Activated CD4-positive, alpha-beta T cell treated with anti-CD3 and anti-CD28 coated beads, Interleukin-2, amount 10 ng/mL, durations not matched to agents 24 days and 14 days (primary cell): ENCODE measurements at regions of chr11 and their contacts with region 1.

Region 1: DNA sequence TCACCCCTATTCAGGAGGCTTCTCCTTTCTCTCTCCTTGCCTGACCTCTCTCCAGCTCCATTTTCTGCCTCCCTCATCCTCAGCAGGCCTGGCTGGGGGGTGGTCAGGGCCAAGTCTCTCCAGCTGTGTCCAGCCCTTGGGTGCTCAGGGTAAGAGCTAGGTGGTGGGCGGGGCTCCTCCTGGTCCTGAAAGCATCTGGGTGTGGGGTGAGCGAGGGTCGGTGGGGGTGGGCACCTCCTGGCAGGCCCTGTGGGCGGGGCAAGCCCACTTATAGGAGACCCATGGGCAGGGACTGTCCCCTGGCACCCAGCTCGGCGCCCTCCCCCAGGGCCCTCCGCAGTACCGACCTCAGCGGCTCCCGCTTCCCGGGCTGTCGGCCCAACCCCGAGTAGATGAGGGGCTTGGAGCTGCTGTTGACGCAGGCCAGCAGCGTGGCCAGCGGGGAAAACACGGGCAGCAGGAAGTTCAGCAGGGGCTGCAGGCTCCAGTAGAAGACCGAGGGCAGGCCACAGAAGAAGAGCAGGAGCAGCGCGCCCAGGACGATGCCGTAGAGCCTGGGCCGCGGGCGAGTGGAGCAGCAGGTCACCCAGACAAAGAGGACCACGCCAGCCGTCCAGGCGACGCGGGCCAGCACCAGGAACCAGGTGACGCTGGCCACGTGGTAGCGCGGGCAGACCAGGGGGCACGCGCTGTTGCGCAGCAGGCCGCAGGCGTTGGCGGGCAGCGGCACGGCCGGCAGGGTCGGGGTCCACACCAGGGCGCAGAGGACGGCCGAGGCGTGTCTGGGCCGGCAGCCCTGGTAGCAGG is 734 bp downstream of the MRGPRG start:
- DNase-seq: no peak
- H3K4me3 Mint-ChIP-seq: no peak overlapping the region
- H3K27ac Mint-ChIP-seq: no peak overlapping the region
- H3K4me1 Mint-ChIP-seq: no peaks in the 10 kb centered on the region
- H3K27me3 Mint-ChIP-seq: peaks cover 3% of the 10 kb centered on the region

Region 2: GRCh38 chr11:3006505-3007183 is 211.2 kb before region 1 on chr11:
- intact Hi-C with region 1: no loop called
- DNase-seq: no peak
- H3K4me3 Mint-ChIP-seq: no peak overlapping the region
- H3K27ac Mint-ChIP-seq: no peak overlapping the region
- H3K4me1 Mint-ChIP-seq: peaks cover 23% of the 10 kb centered on the region
- H3K27me3 Mint-ChIP-seq: no peaks in the 10 kb centered on the region

Region 3: DNA sequence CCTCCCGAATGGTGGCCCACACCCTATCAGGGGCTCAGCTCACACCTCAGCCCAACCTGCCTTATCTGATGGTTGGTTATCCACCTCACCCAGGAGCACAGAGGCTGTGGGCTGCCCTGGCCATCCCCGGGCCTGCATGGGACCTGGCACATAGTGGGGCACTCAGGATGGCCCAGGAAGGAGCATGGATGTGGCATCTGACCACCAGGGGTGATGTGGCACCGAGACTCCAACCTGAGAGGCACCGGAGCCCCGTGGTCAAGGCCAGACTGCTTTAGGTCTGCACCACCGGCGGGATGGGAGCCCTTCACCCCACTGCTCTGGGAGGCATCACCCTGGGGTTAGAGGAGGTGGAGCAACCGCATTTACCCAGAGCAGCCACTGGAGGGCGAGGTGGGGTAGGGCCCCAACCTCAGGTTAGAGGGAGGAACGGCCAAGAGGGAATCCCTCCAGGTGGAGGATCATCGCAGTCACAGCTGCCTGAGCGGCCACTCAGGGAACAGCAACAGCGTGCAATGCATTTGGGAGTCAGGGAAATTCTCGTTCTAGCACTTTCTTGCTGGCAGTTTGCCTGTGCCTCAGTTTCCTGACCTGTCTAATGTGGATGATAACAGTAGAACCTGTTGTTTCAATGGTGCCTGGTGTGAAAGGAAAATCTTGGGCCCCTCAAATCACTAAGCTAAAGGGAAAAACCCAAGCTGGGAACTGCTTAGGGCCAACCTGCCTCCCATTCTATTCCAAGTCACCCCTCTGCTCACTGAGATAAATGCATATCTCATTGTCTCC is 107.8 kb before region 1 on chr11:
- intact Hi-C with region 1: loop called (anchors 1 kb)
- DNase-seq: peak; percentile 75
- H3K4me3 Mint-ChIP-seq: no peak overlapping the region
- H3K27ac Mint-ChIP-seq: no peak overlapping the region
- H3K4me1 Mint-ChIP-seq: no peaks in the 10 kb centered on the region
- H3K27me3 Mint-ChIP-seq: no peaks in the 10 kb centered on the region